Lower leg skin (tissue), 4 donors: ENCODE measurements at regions of chr10 and their contacts with region 1.

Region 1: GRCh38 chr10:102815790-102816549 is 21.2 kb downstream of the CYP17A1 start:
- DNase-seq: peak in 1 of 2 donors; percentile 66
- H3K4me3 ChIP-seq: no peak overlapping the region
- CTCF ChIP-seq: no peak
- POLR2A ChIP-seq: no peak

Region 2: GRCh38 chr10:102420810-102421644 is 394.9 kb before region 1 on chr10 and contains the start of gene FBXL15:
- intact Hi-C with region 1: no loop called
- DNase-seq: peak; percentile 97 to 99
- H3K4me3 ChIP-seq: peak within 1 kb of the TSS; percentile 54
- CTCF ChIP-seq: no peak
- POLR2A ChIP-seq: no peak
- total RNA-seq, gene FBXL15: 18.2 to 25.3 (median 19.1) TPM

Region 3: GRCh38 chr10:102752934-102753664 is 62.9 kb before region 1 on chr10:
- intact Hi-C with region 1: loop called (anchors 10 kb)
- DNase-seq: peak in 1 of 2 donors; percentile 52
- H3K4me3 ChIP-seq: no peak overlapping the region
- CTCF ChIP-seq: no peak
- POLR2A ChIP-seq: no peak

Region 4: DNA sequence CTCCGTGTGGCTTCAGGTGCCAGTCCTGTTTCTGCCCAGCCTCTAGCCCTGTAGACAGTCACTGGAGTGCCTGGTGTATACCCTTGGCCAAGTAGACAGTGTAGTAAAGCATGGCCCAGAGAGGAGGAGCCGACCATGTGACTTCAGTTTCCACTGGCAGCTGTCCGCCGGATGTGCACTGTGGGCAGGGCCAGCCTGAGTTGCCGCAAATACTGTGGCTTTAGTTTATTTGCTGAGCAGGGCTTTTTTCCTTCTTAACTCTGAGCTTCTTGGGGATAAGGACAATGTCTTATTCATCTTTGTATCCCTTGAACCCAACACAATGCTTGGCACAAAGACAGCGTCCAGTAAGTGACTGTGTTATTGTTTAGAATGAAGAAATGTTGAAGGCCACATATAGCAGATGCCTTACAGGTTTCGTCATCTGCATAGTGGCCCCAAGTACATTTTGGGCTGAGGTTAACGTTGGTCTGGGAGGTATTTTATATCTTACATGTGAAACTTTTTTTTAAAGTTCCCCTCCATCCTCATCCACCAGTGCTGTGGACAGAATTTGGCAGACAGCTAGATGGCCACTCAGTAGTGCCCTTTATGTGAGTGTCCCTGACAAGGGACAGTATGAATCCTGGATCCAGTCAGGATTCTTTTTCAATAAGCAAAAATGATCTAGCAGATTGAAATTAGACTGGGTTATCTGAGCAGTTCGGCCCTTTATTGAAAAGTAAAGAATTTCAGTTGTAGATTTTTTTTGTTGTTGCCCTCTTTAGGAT is 19.4 kb before region 1 on chr10:
- intact Hi-C with region 1: no loop called
- DNase-seq: peak; percentile 88 to 97
- H3K4me3 ChIP-seq: no peak overlapping the region
- CTCF ChIP-seq: no peak
- POLR2A ChIP-seq: no peak

Region 5: DNA sequence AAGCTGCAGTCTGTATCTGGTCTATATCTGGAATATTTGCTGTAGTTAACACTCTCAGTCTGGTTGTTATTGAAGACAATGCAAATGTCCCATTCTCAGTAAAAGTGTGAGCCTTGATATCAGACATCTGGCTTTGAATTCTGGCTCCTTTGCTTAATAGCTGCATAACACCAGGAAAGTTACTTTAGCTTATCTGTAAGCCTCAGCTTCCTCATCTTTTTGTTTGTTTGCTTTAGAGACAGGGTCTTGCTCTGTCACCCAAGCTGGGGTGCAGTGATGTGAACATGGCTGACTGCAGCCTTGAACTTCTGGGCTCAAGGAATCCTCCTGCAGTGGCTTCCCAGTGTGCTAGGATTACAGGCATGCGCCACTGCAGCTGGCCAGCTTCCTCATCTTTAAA is 143.4 kb after region 1 on chr10:
- intact Hi-C with region 1: no loop called
- DNase-seq: no peak
- H3K4me3 ChIP-seq: no peak overlapping the region
- CTCF ChIP-seq: no peak
- POLR2A ChIP-seq: no peak

Region 6: GRCh38 chr10:103080891-103081581 is 265.1 kb after region 1 on chr10:
- intact Hi-C with region 1: no loop called
- DNase-seq: no peak
- H3K4me3 ChIP-seq: no peak overlapping the region
- CTCF ChIP-seq: no peak
- POLR2A ChIP-seq: no peak